ENCODE measurements at regions of chr3 and their contacts with region 1.

Region 1: DNA sequence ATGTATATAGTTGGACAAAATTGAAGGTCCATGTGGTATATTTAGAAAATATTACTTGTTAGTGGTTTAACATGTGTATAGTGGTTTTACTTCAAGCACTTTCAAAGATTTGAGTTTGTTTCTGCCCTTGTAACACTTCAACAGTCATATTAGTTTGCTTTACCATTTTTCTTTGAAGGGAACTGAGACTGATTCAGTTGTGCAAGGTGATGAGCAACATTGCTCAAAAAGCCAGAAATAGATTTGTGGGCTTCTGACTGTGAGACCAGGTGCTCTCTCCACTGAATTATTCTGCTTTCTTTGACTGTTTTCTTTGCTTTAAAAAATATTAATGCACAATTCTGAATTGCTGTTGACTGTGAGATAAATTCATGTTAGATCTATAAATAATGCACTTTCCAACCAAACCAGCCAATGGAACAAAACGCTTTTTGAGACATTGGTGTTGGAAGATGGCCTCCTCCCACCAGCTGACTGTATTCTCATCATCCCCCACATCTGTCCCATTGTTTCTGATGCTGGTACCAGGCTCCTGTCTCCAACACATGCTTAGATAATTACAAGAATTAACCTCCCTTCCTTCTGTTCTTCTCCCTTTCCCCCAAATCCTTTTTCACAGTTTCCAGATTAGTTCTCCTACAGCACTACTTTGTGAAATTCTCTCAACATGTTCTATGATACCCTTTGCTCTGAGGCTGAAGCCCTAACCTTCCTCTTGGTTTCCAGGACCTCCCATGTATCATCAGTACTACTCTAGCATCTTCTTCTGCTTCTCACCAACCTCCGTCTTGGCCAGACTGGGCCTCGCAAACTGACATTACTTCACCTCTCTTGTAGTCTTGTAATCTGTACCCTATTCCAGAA is 27.9 kb downstream of the PLCL2 start:
- DNase-seq: no peak
- ATAC-seq: peak; percentile 85
- H3K4me3 Mint-ChIP-seq: peak overlapping the region; percentile 47
- H3K27ac Mint-ChIP-seq: peak overlapping the region; percentile 92
- H3K4me1 Mint-ChIP-seq: peaks cover 84% of the 10 kb centered on the region
- H3K27me3 Mint-ChIP-seq: no peaks in the 10 kb centered on the region
- CTCF ChIP-seq: no peak

Region 2: GRCh38 chr3:16897254-16897926 is 15.2 kb before region 1 on chr3:
- CTCF ChIA-PET with region 1: interaction called, 3 read pairs
- POLR2A ChIA-PET with region 1: interaction called, 7 read pairs
- intact Hi-C with region 1: loop called (anchors 1 kb)
- DNase-seq: peak; percentile 39
- ATAC-seq: peak; percentile 89
- H3K4me3 Mint-ChIP-seq: peak overlapping the region; percentile 66
- H3K27ac Mint-ChIP-seq: peak overlapping the region; percentile 86
- H3K4me1 Mint-ChIP-seq: peaks cover 90% of the 10 kb centered on the region
- H3K27me3 Mint-ChIP-seq: no peaks in the 10 kb centered on the region
- CTCF ChIP-seq: no peak

Region 3: DNA sequence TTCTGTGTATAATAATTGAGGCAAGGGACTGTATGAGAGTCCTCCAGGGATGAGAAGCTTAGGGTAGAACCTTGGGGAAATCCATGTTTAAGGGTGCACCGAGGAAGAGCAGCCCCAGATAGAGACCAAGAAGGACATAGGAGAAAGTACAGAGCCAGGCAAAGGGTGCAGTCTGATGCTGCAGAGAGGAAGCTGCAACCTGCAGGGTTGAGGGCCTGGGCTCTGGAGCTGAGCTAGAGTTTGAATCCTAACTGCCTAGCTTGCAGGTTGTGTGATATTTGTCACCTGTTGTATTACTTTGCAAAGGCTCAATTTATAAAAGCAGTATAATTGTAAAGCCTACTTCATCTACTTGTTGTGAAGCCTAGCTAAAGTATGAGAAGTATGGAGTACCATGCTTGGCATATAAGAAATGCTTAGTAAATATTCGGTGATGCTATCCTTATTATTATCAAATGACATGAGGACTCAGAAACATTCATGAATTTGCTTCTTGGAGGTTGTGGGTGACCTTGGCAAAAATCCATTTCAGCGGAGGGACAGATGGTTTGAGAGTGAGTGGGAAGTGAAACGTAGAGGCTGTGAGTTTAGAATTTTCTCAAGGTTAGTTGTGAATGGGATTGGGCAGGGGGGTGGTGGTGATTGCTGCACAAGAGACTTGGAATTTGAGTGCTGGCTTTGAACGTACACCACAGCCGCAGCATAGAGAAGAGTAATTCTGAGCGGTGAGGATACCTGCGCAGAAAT is 15.9 kb after region 1 on chr3:
- CTCF ChIA-PET with region 1: no interaction called
- POLR2A ChIA-PET with region 1: no interaction called
- intact Hi-C with region 1: loop called (anchors 2 kb)
- DNase-seq: no peak
- ATAC-seq: peak; percentile 10
- H3K4me3 Mint-ChIP-seq: no peak overlapping the region
- H3K27ac Mint-ChIP-seq: peak overlapping the region; percentile 0
- H3K4me1 Mint-ChIP-seq: peaks cover 80% of the 10 kb centered on the region
- H3K27me3 Mint-ChIP-seq: no peaks in the 10 kb centered on the region
- CTCF ChIP-seq: no peak

Region 4: DNA sequence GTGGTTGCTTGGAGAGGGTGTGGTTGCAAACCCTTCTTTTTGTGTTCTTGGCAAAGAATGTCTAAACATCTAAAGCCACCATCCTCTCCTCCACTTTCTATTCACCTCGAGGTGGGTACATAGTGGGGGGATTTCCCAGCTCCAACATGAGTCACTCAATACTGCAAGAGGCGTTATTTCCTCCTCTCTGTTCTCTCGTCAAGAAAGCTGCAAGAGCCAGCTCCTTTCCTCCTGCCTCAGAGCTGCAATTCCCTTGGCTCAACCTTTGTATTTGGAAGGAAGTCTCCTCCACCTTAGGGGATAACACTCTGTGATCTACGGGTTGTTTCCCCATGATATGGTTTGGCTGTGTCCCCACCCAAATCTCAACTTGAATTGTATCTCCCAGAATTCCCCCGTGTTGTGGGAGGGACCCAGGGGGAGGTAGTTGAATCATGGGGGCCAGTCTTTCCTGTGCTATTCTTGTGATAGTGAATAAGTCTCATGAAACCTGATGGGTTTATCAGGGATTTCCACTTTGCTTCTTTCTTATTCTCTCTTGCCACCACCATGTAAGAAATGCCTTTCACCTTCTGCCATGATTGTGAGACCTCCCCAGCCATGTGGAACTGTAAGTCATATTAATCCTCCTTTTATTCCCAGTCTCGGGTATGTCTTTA is 110.5 kb after region 1 on chr3:
- CTCF ChIA-PET with region 1: no interaction called
- POLR2A ChIA-PET with region 1: no interaction called
- intact Hi-C with region 1: loop called (anchors 1 kb)
- DNase-seq: no peak
- ATAC-seq: peak; percentile 99
- H3K4me3 Mint-ChIP-seq: peak overlapping the region; percentile 49
- H3K27ac Mint-ChIP-seq: peak overlapping the region; percentile 89
- H3K4me1 Mint-ChIP-seq: peaks cover 43% of the 10 kb centered on the region
- H3K27me3 Mint-ChIP-seq: no peaks in the 10 kb centered on the region
- CTCF ChIP-seq: no peak